ENCODE measurements at regions of chr10 and their contacts with region 1.

Region 1: DNA sequence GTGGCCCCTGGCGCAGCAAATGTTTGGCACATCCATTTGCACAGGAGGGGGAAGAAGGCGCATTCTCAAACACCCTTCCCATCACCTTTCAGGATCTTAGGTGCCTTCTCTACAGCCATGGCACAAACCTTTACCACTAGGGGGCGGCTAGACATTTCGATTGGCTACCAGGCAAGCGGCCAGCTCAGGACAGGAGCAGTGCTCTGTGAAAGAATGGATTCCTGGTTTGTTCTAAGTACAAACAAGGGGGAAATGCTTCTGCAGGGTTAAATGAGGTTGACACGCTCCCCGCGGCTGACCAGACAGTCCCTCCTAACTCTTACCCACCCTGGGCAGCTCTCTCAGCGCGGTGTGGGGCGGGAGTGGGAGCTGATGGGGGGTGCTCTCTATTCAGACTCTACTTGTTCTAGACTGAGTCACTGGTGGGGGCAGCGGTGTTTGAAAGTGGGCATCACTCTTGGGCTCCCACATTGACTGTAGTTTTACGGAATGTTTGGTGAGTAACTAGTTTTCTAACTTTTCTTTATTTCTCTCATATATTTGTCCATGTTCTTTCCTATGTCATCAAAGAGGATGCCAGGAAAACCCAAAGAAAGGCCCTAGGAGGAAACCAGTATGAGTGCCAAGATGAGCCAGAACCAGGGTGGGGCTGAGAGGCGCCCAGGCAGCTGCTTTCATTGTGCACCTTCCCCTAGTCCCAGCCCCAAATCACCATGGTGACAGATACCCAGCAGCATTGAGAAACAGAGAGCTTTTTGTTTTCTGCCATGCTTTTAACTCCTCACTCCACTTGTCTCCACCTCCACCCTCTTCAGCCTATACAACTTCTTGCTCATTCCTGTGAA is 61.4 kb upstream of the GPR158 start:
- DNase-seq: no peak
- ATAC-seq: peak; percentile 99
- H3K4me3 ChIP-seq: no peak overlapping the region
- H3K27ac ChIP-seq: no peak overlapping the region
- H3K4me1 ChIP-seq: no peaks in the 10 kb centered on the region
- H3K27me3 ChIP-seq: no peaks in the 10 kb centered on the region
- CTCF ChIP-seq: peak; percentile 80 to 86 (median 84)
- EP300 ChIP-seq: no peak
- POLR2A ChIP-seq: no peak
- RAD21 ChIP-seq: peak; percentile 70

Region 2: DNA sequence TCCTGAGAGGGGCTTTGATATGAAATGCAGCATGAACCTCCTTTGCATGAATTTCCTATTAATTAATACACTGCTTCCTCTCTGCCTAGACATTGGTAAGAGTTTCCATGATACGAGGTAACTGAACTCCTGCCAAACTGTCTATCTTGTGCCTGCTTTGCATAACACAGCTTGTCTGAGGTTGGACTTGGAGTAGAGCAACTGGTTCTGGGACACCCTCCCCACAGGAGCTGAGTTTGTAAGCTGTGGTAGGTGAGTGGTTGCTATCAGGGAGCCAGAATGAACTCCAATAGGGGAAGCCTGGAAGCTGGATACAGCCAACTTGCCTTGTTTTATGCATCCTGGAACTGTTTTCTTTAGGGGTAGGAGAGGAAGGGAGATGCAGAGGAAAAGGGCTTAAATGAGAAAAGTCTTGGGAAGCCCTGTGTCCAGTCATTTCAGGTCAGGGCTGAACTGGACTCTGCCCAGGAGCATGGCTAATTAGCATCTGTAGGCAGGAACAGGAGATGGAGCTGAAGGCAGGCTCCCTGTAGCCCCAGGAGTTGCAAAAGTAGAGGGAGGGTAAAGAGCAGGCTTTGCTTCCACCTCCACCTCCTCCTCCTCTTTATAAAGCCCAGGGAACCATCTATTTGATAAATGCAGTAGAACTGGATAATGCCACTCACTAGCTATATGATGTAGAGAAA is 11.8 kb before region 1 on chr10:
- CTCF ChIA-PET with region 1: interaction called, 14 read pairs
- POLR2A ChIA-PET with region 1: no interaction called
- RAD21 ChIA-PET with region 1: no interaction called
- SMC1A ChIA-PET with region 1: interaction called, 5 read pairs
- in situ Hi-C with region 1: no loop called
- intact Hi-C with region 1: no loop called
- DNase-seq: no peak
- ATAC-seq: no peak
- H3K4me3 ChIP-seq: no peak overlapping the region
- H3K27ac ChIP-seq: no peak overlapping the region
- H3K4me1 ChIP-seq: no peaks in the 10 kb centered on the region
- H3K27me3 ChIP-seq: no peaks in the 10 kb centered on the region; a peak in 1 of 4 replicates
- CTCF ChIP-seq: no peak
- EP300 ChIP-seq: no peak
- POLR2A ChIP-seq: no peak
- RAD21 ChIP-seq: no peak

Region 3: DNA sequence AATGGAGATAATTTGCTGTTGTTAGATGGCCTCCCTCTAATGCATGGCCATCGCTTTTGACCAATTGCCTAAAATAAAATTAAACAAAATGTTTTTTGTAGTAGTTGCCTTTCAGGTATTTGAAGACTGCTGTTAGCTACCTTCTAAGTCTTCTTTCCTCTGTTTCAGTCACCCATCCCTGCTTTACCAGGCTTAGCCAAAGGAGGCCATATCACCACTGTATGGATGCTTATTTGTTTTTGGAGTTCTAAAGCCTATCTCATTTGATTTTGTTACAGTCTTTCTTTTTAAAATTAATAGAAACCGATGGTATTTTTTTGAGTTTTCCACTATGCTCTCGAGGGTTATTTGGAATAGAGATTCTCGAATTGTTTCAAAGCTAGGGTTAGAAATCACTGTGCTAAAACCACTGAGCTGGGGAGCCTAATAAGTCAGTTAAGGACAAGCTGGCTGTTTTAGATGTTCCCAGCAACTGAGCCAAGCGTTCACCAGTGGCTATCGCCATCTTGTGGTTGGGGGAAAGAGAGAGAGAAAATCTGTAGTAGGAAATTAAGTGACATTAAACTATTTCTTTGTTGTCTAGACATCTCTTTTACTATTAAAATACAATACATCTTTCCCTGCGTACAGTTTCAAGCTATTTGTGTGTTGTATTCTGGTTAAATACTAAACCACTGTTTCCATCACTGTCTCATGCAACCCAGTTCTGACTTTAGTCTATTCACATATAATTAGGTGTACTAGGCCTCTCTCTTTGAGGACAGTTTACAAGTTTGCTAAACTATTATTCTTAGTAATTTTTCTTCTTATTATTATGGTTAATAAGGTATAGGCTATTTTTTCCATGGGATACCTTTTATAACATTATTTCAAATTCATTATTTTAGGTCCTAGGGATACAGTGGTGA is 113.6 kb after region 1 on chr10:
- CTCF ChIA-PET with region 1: interaction called, 45 read pairs
- POLR2A ChIA-PET with region 1: no interaction called
- RAD21 ChIA-PET with region 1: interaction called, 11 read pairs
- SMC1A ChIA-PET with region 1: interaction called, 18 read pairs
- in situ Hi-C with region 1: no loop called
- intact Hi-C with region 1: loop called (anchors 1 kb)
- DNase-seq: peak; percentile 4
- ATAC-seq: peak; percentile 80
- H3K4me3 ChIP-seq: no peak overlapping the region
- H3K27ac ChIP-seq: no peak overlapping the region
- H3K4me1 ChIP-seq: no peaks in the 10 kb centered on the region
- H3K27me3 ChIP-seq: no peaks in the 10 kb centered on the region
- CTCF ChIP-seq: peak; percentile 50 to 74 (median 59)
- EP300 ChIP-seq: no peak
- POLR2A ChIP-seq: no peak
- RAD21 ChIP-seq: peak; percentile 62

Region 4: GRCh38 chr10:25713894-25714240 is 600.5 kb after region 1 on chr10:
- CTCF ChIA-PET with region 1: interaction called, 5 read pairs
- POLR2A ChIA-PET with region 1: no interaction called
- RAD21 ChIA-PET with region 1: no interaction called
- SMC1A ChIA-PET with region 1: no interaction called
- in situ Hi-C with region 1: no loop called
- intact Hi-C with region 1: loop called (anchors 10 kb)
- DNase-seq: no peak
- ATAC-seq: no peak
- H3K4me3 ChIP-seq: no peak overlapping the region
- H3K27ac ChIP-seq: no peak overlapping the region
- H3K4me1 ChIP-seq: no peaks in the 10 kb centered on the region
- H3K27me3 ChIP-seq: no peaks in the 10 kb centered on the region
- CTCF ChIP-seq: no peak
- EP300 ChIP-seq: no peak
- POLR2A ChIP-seq: no peak
- RAD21 ChIP-seq: no peak

Measured in GM12878 (cell line).